ENCODE measurements at regions of chr5 and their contacts with region 1.

Region 1: GRCh38 chr5:141223112-141223783 is at the start of gene PCDHB14:
- DNase-seq: no peak
- ATAC-seq: peak; percentile 100
- H3K4me3 Mint-ChIP-seq: peak within 1 kb of the TSS; percentile 62
- H3K27ac Mint-ChIP-seq: peak within 1 kb of the TSS; percentile 19; the same call in 1 of the 2 replicates
- H3K4me1 Mint-ChIP-seq: peaks cover 11% of the 10 kb centered on the region
- H3K27me3 Mint-ChIP-seq: no peaks in the 10 kb centered on the region; the same call in none of the 2 replicates
- CTCF ChIP-seq: no peak
- total RNA-seq, gene PCDHB14: 2.6 to 3.5 TPM (median 2.8 TPM) in 3 replicates

Region 2: DNA sequence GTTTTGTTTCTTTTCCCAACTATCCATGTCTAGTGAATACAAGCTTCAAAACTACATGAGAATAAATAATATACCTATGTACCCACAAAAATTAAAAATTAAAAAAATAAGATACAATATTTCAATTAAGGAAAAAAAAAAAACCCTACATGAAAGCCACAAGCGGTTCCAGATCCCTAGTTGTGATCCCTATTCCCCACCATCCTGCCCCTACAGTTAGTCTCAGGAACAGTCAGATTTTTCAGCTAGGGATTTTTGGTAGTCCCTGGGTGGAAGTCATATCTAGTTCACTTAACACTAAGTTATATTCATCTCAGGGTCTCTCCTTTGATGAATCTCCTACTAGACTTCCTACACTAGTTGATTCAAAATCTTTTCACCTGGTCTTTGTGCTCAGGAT is 190.6 kb before region 1 on chr5:
- CTCF ChIA-PET with region 1: no interaction called
- POLR2A ChIA-PET with region 1: no interaction called
- DNase-seq: no peak
- ATAC-seq: peak; percentile 48; the same call in 1 of the 2 replicates
- H3K4me3 Mint-ChIP-seq: no peak overlapping the region
- H3K27ac Mint-ChIP-seq: no peak overlapping the region
- H3K4me1 Mint-ChIP-seq: no peaks in the 10 kb centered on the region; the same call in 1 of the 2 replicates
- H3K27me3 Mint-ChIP-seq: no peaks in the 10 kb centered on the region
- CTCF ChIP-seq: no peak

Region 3: DNA sequence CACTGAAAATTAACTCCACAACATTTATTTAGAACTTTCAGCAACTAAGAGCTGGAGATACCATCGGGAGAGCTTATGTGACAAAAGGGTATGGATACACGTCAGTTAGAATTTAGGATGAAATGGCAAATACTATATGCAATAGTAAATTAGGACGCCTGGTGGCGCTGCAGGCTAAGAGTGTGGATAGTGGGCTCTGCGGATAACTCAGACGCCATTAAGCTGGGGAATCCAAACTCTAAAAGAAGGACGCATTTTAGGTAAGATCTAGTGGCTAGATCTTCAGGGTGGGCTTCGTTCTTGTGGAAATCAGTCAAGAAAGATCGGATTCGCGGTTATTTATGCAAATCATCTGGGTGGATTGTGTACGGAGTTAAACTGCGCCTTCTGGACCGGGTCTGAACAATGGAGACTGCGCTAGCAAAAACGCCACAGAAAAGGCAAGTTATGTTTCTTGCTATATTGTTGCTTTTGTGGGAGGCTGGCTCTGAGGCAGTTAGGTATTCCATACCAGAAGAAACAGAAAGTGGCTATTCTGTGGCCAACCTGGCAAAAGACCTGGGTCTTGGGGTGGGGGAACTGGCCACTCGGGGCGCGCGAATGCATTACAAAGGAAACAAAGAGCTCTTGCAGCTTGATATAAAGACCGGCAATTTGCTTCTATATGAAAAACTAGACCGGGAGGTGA is 88.1 kb before region 1 on chr5 and contains the start of gene PCDHB5:
- CTCF ChIA-PET with region 1: interaction called, 10 read pairs
- POLR2A ChIA-PET with region 1: no interaction called
- DNase-seq: peak; percentile 72
- ATAC-seq: peak; percentile 89
- H3K4me3 Mint-ChIP-seq: peak within 1 kb of the TSS; percentile 74
- H3K27ac Mint-ChIP-seq: peak within 1 kb of the TSS; percentile 64; the same call in 1 of the 2 replicates
- H3K4me1 Mint-ChIP-seq: peaks cover 4% of the 10 kb centered on the region; the same call in 1 of the 2 replicates
- H3K27me3 Mint-ChIP-seq: no peaks in the 10 kb centered on the region
- CTCF ChIP-seq: peak; percentile 72
- total RNA-seq, gene PCDHB5: 6.8 to 12.5 TPM (median 8.5 TPM) in 3 replicates

Region 4: GRCh38 chr5:141199359-141200235 is 23.7 kb before region 1 on chr5 and contains the start of gene PCDHB11:
- CTCF ChIA-PET with region 1: interaction called, 19 read pairs
- POLR2A ChIA-PET with region 1: no interaction called
- DNase-seq: no peak
- ATAC-seq: peak; percentile 67
- H3K4me3 Mint-ChIP-seq: peak within 1 kb of the TSS; percentile 24
- H3K27ac Mint-ChIP-seq: no peak within 1 kb of the TSS
- H3K4me1 Mint-ChIP-seq: peaks cover 7% of the 10 kb centered on the region
- H3K27me3 Mint-ChIP-seq: no peaks in the 10 kb centered on the region; the same call in 1 of the 2 replicates
- CTCF ChIP-seq: peak; percentile 32; the same call in 1 of the 2 replicates
- total RNA-seq, gene PCDHB11: 0.61 to 1.2 TPM (median 0.92 TPM) in 3 replicates

Region 5: DNA sequence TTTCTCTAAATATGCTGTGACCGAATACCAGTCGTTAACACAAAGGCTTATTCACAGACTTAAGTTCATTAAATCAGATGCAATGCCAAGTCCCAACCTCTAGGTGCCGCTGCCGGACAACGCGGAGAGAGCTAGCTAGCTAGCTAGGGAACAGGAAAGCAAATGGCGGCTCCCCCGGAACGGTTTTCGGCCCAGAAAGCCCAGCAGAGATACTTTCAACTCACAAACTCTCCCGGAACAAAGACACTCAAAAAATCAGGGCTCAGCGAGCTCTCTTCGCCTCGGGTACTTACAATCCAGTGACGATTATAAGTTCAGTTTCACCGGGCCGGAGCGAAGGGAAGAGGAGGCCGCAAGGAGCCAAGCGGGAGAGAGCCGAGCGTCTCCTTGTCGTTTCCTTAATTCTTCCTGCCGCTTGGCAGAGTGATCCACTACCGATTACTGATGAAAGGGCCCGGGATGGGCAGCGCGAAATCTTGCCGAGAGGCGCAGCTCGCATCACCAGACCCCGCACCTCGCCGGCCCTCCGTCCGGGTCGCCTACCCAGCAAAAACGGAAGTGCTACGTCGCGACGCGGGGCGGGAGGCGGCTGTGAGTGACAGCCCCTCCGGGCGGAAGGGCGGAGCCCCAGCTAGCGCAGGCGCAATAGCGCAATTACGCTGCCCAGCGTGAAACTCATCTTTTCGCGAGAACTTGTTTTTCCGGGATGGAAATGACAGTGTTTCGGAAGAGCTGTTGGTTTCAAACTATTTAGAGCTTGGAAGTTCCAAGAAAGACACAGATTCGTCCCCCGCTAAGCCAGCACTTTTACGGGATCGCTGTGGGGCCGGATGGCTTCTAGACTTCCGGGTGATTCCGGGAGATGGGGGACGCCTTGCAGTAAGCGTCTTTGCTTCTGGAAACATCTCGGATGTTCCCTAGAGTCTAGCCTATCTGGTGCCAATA is 97.2 kb after region 1 on chr5 and contains the start of gene TAF7:
- CTCF ChIA-PET with region 1: interaction called, 27 read pairs
- POLR2A ChIA-PET with region 1: no interaction called
- DNase-seq: peak; percentile 95
- ATAC-seq: peak; percentile 94
- H3K4me3 Mint-ChIP-seq: peak within 1 kb of the TSS; percentile 99
- H3K27ac Mint-ChIP-seq: peak within 1 kb of the TSS; percentile 99
- H3K4me1 Mint-ChIP-seq: peaks cover 24% of the 10 kb centered on the region
- H3K27me3 Mint-ChIP-seq: peaks cover 24% of the 10 kb centered on the region
- CTCF ChIP-seq: peak; percentile 85
- total RNA-seq, gene TAF7: 87.8 to 96.2 TPM (median 90.1 TPM) in 3 replicates

Region 6: GRCh38 chr5:141369994-141370848 is 147.0 kb after region 1 on chr5 and contains the start of gene PCDHGB3:
- CTCF ChIA-PET with region 1: interaction called, 15 read pairs
- POLR2A ChIA-PET with region 1: no interaction called
- DNase-seq: peak; percentile 56
- ATAC-seq: peak; percentile 95
- H3K4me3 Mint-ChIP-seq: peak within 1 kb of the TSS; percentile 61
- H3K27ac Mint-ChIP-seq: peak within 1 kb of the TSS; percentile 91
- H3K4me1 Mint-ChIP-seq: peaks cover 5% of the 10 kb centered on the region
- H3K27me3 Mint-ChIP-seq: peaks cover 8% of the 10 kb centered on the region
- CTCF ChIP-seq: no peak
- total RNA-seq, gene PCDHGB3: 3.3 to 4.2 TPM (median 3.5 TPM) in 3 replicates

Region 7: GRCh38 chr5:141512390-141512910 is 289.2 kb after region 1 on chr5:
- CTCF ChIA-PET with region 1: interaction called, 40 read pairs
- POLR2A ChIA-PET with region 1: no interaction called
- DNase-seq: peak; percentile 99
- ATAC-seq: peak; percentile 82
- H3K4me3 Mint-ChIP-seq: peak overlapping the region; percentile 87
- H3K27ac Mint-ChIP-seq: no peak overlapping the region
- H3K4me1 Mint-ChIP-seq: peaks cover 61% of the 10 kb centered on the region
- H3K27me3 Mint-ChIP-seq: no peaks in the 10 kb centered on the region
- CTCF ChIP-seq: peak; percentile 99